ENCODE measurements at regions of chrX and their contacts with region 1.

Region 1: DNA sequence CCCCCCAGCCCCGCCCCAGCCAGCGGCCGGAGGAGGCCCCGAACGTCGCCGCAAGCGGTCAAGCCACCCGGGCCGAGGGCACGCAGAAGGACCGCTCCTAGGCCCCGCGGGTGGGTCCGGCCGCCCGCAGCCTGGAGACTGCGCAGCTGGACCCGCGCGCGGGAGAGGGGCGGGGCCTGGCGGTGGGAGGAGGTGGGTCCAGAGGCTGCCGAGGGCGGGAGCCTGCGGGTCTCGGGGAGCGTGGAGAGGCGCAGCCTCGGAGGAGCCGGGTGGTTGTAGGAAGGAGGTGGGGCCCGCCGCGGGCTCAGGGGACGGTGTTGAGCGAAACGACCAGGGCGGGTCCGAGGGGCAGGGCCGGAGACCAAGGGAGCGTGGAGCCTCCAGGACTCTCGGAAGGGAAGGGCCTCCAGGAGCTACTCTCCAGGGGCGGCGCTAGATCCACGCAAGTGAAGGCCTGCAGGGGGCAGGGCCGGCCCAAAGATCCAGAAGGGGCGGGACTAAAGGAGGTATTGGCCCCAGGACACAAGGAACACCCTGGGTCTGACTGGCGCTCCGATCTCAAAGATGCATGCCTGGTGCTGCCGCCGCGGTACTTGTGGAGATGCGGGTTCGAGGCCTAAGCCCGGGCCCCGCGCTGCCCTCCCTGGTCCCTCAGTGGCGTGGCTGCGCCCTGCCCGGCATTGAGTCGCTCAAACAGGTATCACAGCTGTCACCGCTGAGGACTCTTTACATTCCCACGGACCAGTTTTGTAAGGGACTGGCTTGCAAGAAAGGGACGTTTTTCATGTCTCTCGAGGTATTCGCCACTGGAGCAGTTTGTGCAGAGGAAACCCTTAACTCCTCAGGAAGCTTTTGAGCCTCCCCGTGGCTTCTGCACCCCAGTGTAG is 5.9 kb downstream of the TIMM17B start:
- DNase-seq: peak; percentile 68 to 85 (median 73)
- H3K4me3 ChIP-seq: peak overlapping the region; percentile 49
- H3K4me3 Mint-ChIP-seq: peak overlapping the region; percentile 73 to 97 (median 84)
- H3K27ac ChIP-seq: peak overlapping the region; percentile 11
- H3K27ac Mint-ChIP-seq: peak overlapping the region in 7 of 8 donors; percentile 17 to 92 (median 71)
- H3K4me1 ChIP-seq: peaks cover 11% of the 10 kb centered on the region
- H3K4me1 Mint-ChIP-seq: peaks cover 15 to 31% (median 26%) of the 10 kb centered on the region in 3 donors
- H3K27me3 ChIP-seq: no peaks in the 10 kb centered on the region
- H3K27me3 Mint-ChIP-seq: peaks cover 0 to 5% of the 10 kb centered on the region in 2 donors

Region 2: DNA sequence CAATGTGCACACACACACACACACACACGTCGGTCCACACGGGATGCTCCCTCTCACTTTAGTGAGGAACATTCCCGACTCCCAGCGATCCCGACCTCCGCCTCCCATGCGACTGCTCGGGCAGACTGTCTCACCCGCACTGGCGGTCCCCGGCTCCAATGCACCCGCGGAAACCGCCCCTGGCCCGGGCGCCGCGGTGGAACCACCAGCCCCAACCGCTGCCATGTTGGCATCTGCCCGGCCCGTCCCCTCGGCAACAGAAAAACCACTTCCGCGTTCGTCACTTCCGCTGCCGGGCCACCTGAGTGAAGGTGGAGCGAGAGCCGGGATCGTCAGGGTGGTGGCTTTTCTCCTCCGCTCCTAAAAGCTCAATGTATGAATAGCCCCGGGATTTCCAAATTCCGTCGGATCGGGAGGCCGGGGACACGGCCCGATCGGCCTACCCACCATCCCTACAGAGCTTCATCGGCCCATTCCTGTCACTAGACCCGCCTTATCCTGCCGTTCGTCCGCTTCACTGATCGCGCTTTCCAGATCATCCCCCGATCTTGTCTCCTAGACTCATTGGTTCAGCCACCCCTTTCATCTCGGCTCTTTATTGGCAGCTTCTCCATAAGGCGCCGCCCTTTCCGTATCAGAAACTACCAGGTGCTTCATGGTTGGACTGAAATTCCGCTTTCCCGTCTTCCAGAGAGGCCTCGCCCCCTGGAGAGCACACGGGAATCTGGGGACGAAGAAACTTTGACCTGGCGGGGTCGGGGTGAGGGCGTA is 20.0 kb after region 1 on chrX and contains the start of gene SLC35A2:
- CTCF ChIA-PET with region 1: interaction called, 10 read pairs
- POLR2A ChIA-PET with region 1: interaction called, 15 read pairs
- DNase-seq: peak; percentile 78 to 93 (median 87)
- H3K4me3 ChIP-seq: peak within 1 kb of the TSS; percentile 65
- H3K4me3 Mint-ChIP-seq: peak within 1 kb of the TSS; percentile 86 to 94 (median 88)
- H3K27ac ChIP-seq: peak within 1 kb of the TSS; percentile 92
- H3K27ac Mint-ChIP-seq: peak within 1 kb of the TSS; percentile 90 to 99 (median 95)
- H3K4me1 ChIP-seq: peaks cover 55% of the 10 kb centered on the region
- H3K4me1 Mint-ChIP-seq: peaks cover 43 to 61% (median 58%) of the 10 kb centered on the region in 3 donors
- H3K27me3 ChIP-seq: no peaks in the 10 kb centered on the region
- H3K27me3 Mint-ChIP-seq: peaks cover 0 to 12% of the 10 kb centered on the region in 2 donors
- total RNA-seq, gene SLC35A2: 27.1 to 27.2 TPM

Region 3: GRCh38 chrX:48945516-48946348 is 54.1 kb after region 1 on chrX:
- CTCF ChIA-PET with region 1: interaction called, 21 read pairs
- POLR2A ChIA-PET with region 1: no interaction called
- DNase-seq: peak; percentile 24 to 68 (median 53)
- H3K4me3 ChIP-seq: no peak overlapping the region
- H3K4me3 Mint-ChIP-seq: peak overlapping the region in 2 of 7 donors; percentile 4 to 51
- H3K27ac ChIP-seq: no peak overlapping the region
- H3K27ac Mint-ChIP-seq: peak overlapping the region in 7 of 8 donors; percentile 22 to 92 (median 62)
- H3K4me1 ChIP-seq: peaks cover 41% of the 10 kb centered on the region
- H3K4me1 Mint-ChIP-seq: peaks cover 47 to 65% (median 62%) of the 10 kb centered on the region in 3 donors
- H3K27me3 ChIP-seq: no peaks in the 10 kb centered on the region
- H3K27me3 Mint-ChIP-seq: peaks cover 0 to 6% of the 10 kb centered on the region in 2 donors

Measured in CD8-positive, alpha-beta memory T cell (primary cell).